Lower leg skin (tissue), 4 donors: ENCODE measurements at regions of chr17 and their contacts with region 1.

Region 1: DNA sequence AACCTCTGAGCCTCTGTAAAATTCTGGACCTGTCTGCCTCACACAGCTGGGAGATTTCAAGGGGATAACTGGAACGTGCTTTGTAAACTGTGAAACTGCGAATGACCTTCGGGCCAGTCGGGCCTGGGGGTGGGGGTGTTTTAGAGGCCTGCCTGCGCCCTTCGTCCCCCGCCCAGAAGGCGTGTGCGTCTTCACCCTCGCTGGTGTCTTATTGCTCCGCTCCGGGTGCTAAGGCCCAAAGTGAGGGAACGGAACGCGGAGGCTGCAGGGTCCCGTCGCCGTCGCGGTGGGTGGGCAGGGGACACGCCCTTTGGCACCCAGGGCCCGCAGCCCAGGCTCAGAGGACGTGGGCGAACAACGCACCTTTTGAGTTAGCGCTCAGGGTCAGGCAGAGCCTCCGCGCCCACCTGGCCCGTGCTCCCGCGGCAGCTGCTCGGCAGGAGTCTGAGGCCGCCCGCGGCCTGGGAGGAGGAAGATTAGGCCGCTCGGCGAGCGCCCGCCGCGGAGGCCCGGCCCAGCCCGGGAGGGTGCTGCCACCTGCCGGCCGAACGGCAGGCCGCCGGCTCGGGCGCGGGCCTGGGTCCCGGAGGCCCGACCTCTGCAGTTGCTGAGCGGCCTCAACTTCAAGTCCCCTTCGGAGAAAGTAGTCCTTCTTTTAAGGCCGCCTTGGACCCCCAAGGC is 29.7 kb downstream of the DCAKD start:
- DNase-seq: peak in 1 of 2 donors; percentile 91
- H3K4me3 ChIP-seq: no peak overlapping the region
- CTCF ChIP-seq: no peak
- POLR2A ChIP-seq: no peak

Region 2: GRCh38 chr17:44210342-44211192 is 811.2 kb before region 1 on chr17:
- intact Hi-C with region 1: no loop called
- DNase-seq: peak in 1 of 2 donors; percentile 98
- H3K4me3 ChIP-seq: no peak overlapping the region
- CTCF ChIP-seq: peak in 2 of 3 donors; percentile 17 to 72
- POLR2A ChIP-seq: no peak

Region 3: GRCh38 chr17:45098869-45099616 is 77.3 kb after region 1 on chr17:
- intact Hi-C with region 1: loop called (anchors 10 kb)
- DNase-seq: peak; percentile 87 to 98
- H3K4me3 ChIP-seq: no peak overlapping the region
- CTCF ChIP-seq: peak in 1 of 3 donors; percentile 31
- POLR2A ChIP-seq: no peak